ENCODE measurements at regions of chr4 and their contacts with region 1.

Region 1: GRCh38 chr4:76213415-76214176 is at the start of gene SCARB2:
- DNase-seq: peak; percentile 72 to 78 (median 74)
- ATAC-seq: peak; percentile 82
- H3K4me3 ChIP-seq: peak within 1 kb of the TSS; percentile 76
- H3K4me3 Mint-ChIP-seq: peak within 1 kb of the TSS; percentile 87 to 96 (median 94)
- H3K27ac ChIP-seq: peak within 1 kb of the TSS; percentile 85
- H3K27ac Mint-ChIP-seq: peak within 1 kb of the TSS; percentile 89 to 97 (median 95)
- H3K4me1 ChIP-seq: peaks cover 21 to 39% of the 10 kb centered on the region in 2 donors
- H3K4me1 Mint-ChIP-seq: peaks cover 36 to 71% (median 66%) of the 10 kb centered on the region in 7 donors
- H3K27me3 ChIP-seq: no peaks in the 10 kb centered on the region
- H3K27me3 Mint-ChIP-seq: peaks cover 0 to 28% (median 0%) of the 10 kb centered on the region in 5 donors
- total RNA-seq, gene SCARB2: 13.5 to 35.7 (median 29.1) TPM

Region 2: GRCh38 chr4:75673027-75673958 is 540.3 kb before region 1 on chr4 and contains the start of gene G3BP2:
- CTCF ChIA-PET with region 1: no interaction called
- POLR2A ChIA-PET with region 1: no interaction called
- intact Hi-C with region 1: loop called in 1 of 2 experiments (anchors 5 kb)
- DNase-seq: peak; percentile 87 to 99 (median 97)
- ATAC-seq: peak; percentile 97
- H3K4me3 ChIP-seq: peak within 1 kb of the TSS; percentile 91
- H3K4me3 Mint-ChIP-seq: peak within 1 kb of the TSS; percentile 96 to 100 (median 98)
- H3K27ac ChIP-seq: peak within 1 kb of the TSS; percentile 96
- H3K27ac Mint-ChIP-seq: peak within 1 kb of the TSS; percentile 92 to 100 (median 99)
- H3K4me1 ChIP-seq: peaks cover 38 to 43% of the 10 kb centered on the region in 2 donors
- H3K4me1 Mint-ChIP-seq: peaks cover 36 to 47% (median 44%) of the 10 kb centered on the region in 7 donors
- H3K27me3 ChIP-seq: no peaks in the 10 kb centered on the region
- H3K27me3 Mint-ChIP-seq: no peaks in the 10 kb centered on the region
- total RNA-seq, gene G3BP2: 161 to 299 (median 167) TPM

Region 3: DNA sequence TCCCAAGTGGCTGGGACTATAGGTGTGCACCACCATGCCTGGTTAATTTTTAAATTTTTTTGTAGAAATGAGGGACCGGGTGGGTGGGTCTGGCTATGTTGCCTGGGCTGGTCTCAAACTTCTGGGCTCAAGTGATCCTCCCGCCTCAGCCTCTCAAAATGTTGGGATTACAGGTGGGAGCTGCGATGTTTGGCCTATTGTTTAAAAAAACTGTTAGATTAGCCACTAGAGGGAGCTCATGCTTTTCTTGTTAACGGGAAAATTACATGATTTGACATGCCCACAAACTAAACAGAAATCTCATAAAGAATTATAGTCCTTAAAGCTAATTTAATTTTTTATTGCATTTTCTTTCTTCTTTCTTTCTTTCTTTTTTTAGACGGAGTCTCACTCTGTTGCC is 217.9 kb before region 1 on chr4:
- CTCF ChIA-PET with region 1: no interaction called
- POLR2A ChIA-PET with region 1: no interaction called
- intact Hi-C with region 1: loop called (anchors 5 to 10 kb)
- DNase-seq: peak in 7 of 9 donors; percentile 13 to 62 (median 43)
- ATAC-seq: peak; percentile 39
- H3K4me3 ChIP-seq: no peak overlapping the region
- H3K4me3 Mint-ChIP-seq: no peak overlapping the region
- H3K27ac ChIP-seq: no peak overlapping the region
- H3K27ac Mint-ChIP-seq: no peak overlapping the region
- H3K4me1 ChIP-seq: no peaks in the 10 kb centered on the region
- H3K4me1 Mint-ChIP-seq: peaks cover 0 to 10% (median 5%) of the 10 kb centered on the region in 7 donors
- H3K27me3 ChIP-seq: no peaks in the 10 kb centered on the region
- H3K27me3 Mint-ChIP-seq: peaks cover 0 to 10% (median 2%) of the 10 kb centered on the region in 5 donors

Region 4: GRCh38 chr4:76198411-76199237 is 15.0 kb before region 1 on chr4:
- CTCF ChIA-PET with region 1: interaction called, 3 read pairs
- POLR2A ChIA-PET with region 1: interaction called, 6 read pairs
- intact Hi-C with region 1: loop called in 1 of 2 experiments (anchors 1 kb)
- DNase-seq: peak in 3 of 9 donors; percentile 7 to 18 (median 11)
- ATAC-seq: peak; percentile 67
- H3K4me3 ChIP-seq: no peak overlapping the region
- H3K4me3 Mint-ChIP-seq: peak overlapping the region in 8 of 10 donors; percentile 1 to 60 (median 47)
- H3K27ac ChIP-seq: no peak overlapping the region
- H3K27ac Mint-ChIP-seq: peak overlapping the region in 8 of 9 donors; percentile 12 to 81 (median 40)
- H3K4me1 ChIP-seq: peaks cover 0 to 19% of the 10 kb centered on the region in 2 donors
- H3K4me1 Mint-ChIP-seq: peaks cover 25 to 69% (median 55%) of the 10 kb centered on the region in 7 donors
- H3K27me3 ChIP-seq: no peaks in the 10 kb centered on the region
- H3K27me3 Mint-ChIP-seq: no peaks in the 10 kb centered on the region

Region 5: GRCh38 chr4:77193511-77194102 is 980.0 kb after region 1 on chr4:
- CTCF ChIA-PET with region 1: no interaction called
- POLR2A ChIA-PET with region 1: no interaction called
- intact Hi-C with region 1: loop called in 1 of 2 experiments (anchors 1 kb)
- DNase-seq: peak; percentile 47 to 79 (median 72)
- ATAC-seq: peak; percentile 95
- H3K4me3 ChIP-seq: peak overlapping the region; percentile 25
- H3K4me3 Mint-ChIP-seq: peak overlapping the region; percentile 78 to 93 (median 90)
- H3K27ac ChIP-seq: peak overlapping the region; percentile 52
- H3K27ac Mint-ChIP-seq: peak overlapping the region; percentile 88 to 97 (median 92)
- H3K4me1 ChIP-seq: peaks cover 0 to 6% of the 10 kb centered on the region in 2 donors
- H3K4me1 Mint-ChIP-seq: peaks cover 5 to 22% (median 18%) of the 10 kb centered on the region in 7 donors
- H3K27me3 ChIP-seq: peaks cover 0 to 5% of the 10 kb centered on the region in 2 donors
- H3K27me3 Mint-ChIP-seq: peaks cover 0 to 10% (median 0%) of the 10 kb centered on the region in 5 donors

Measured in naive thymus-derived CD4-positive, alpha-beta T cell (primary cell).